Right cardiac atrium (tissue), 5 donors: ENCODE measurements at regions of chr10 and their contacts with region 1.

Region 1: DNA sequence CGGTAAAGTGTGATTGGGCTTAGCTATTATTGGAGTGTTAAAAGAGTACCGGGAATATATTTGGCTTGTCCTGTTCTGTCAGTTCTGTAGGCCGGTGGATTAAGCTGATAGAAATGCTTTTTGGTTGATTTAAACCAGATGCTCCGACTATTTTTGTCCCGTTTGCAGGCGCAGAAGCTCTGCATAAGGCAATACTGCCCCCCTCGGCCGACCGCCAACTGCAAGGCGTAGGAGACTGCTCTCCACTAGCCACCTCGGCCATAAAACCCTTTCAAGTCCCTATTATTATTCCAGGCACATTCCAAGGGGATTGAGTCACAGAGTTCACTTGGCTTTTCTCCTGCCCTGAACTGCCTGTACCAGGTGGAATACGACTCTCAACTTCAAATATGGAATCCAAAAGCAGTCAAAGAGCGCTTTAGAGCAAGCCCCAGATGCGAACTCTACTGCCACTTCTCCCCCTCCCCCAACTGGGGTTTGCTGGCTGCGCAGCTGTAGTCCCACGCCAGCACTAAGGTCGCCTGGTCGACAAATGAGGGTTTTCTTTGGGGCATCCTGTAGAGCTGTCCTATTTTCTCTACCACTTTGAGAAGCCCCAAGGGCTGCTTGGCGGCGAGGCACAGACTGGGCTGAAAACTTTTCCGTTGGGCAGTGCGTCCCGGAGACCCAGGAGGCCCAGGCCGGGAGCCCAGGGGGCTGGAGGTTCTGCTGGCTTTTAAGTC is 108.3 kb downstream of the REEP3 start:
- DNase-seq: peak; percentile 96 to 98 (median 98)
- ATAC-seq: peak; percentile 83 to 85
- H3K4me3 ChIP-seq: peak overlapping the region; percentile 46
- H3K27ac ChIP-seq: peak overlapping the region; percentile 100
- H3K4me1 ChIP-seq: peaks cover 5% of the 10 kb centered on the region
- H3K27me3 ChIP-seq: no peaks in the 10 kb centered on the region

Region 2: GRCh38 chr10:63206997-63207811 is 422.3 kb before region 1 on chr10:
- intact Hi-C with region 1: loop called in 2 of 4 experiments (anchors 5 to 10 kb)
- DNase-seq: peak in 1 of 3 donors; percentile 53
- ATAC-seq: peak; percentile 85 to 86
- H3K4me3 ChIP-seq: peak overlapping the region; percentile 29
- H3K27ac ChIP-seq: peak overlapping the region; percentile 65
- H3K4me1 ChIP-seq: peaks cover 5% of the 10 kb centered on the region
- H3K27me3 ChIP-seq: no peaks in the 10 kb centered on the region

Region 3: DNA sequence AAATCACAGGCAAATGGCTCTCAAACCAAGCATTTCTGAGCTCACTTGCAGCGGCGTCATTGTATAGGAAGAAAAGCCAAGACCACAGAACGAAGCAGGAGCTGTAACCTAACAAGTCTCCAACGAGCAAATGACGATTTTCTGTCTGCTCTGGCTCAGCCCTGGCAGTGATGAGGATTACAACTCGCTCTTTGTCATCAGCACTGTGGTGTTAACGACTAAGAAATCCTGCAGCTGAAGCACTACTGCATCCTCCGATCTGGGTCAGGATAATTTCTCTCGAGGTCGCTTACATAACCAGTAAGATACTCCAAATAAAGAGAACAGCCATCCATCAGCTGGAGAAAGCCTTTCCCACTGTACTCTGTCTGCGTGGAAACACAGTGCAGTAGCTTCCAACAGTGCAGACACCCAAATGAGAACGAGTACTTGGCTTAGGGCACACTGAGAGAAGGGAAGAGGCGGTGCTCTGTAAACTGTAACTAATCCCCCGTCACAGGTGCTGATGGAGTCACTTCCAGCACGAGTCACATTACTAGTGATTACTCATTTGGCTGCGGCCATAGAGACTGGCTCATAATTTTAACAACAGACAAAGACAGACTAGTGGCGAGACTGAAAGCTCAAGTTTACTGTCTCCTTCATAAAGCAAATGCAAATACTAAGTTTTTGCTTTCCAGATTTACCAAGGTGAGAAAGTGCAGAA is 360.6 kb before region 1 on chr10:
- intact Hi-C with region 1: loop called in 1 of 4 experiments (anchors 2 kb)
- DNase-seq: peak; percentile 69 to 74 (median 73)
- ATAC-seq: peak; percentile 97 to 99
- H3K4me3 ChIP-seq: peak overlapping the region; percentile 93
- H3K27ac ChIP-seq: peak overlapping the region; percentile 99
- H3K4me1 ChIP-seq: no peaks in the 10 kb centered on the region
- H3K27me3 ChIP-seq: no peaks in the 10 kb centered on the region

Region 4: DNA sequence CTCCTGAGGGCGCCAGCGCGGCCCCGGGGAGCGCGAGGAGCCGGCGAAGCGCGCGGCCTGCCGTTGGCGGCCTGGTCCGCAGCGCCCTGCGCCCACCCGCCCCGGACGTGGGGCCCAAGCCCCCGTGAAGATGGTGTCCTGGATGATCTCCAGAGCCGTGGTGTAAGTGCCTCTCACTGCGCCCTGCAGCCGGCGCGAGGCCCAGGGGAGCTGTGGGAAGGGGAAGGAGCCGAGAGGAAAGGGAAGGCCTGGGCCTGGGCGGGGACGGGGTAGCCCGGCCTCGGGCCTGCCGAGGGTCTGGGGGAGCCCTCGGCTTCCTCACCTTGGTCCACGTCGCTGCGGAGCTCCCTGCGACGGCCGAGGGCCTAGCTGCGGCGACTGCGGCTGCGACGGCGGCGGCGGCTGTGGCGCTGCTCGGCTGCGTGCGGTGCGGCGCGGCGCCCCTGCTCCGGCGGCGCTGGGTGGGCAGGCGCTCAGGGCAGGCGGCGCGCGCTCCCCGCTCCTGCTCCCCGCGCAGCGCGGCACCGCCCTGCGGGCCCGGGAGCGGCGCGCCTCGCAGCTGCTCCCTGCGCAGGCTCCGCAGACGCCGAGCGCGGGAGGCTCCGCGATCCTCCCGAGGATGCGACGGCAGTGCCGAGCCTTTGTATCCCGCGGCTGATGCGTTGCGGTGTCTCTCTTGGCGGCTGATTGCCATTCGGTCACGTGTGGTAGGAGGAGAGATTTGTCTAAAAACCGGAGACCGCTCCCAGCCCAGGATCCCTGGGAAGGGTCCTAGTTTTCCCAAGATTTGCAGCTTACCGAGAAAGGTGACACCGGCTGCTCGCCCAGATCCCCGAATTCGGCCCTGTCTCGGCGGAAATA is 107.9 kb before region 1 on chr10:
- intact Hi-C with region 1: loop called in 1 of 4 experiments (anchors 5 kb)
- DNase-seq: peak; percentile 76 to 89 (median 89)
- ATAC-seq: peak; percentile 90
- H3K4me3 ChIP-seq: peak overlapping the region; percentile 60
- H3K27ac ChIP-seq: peak overlapping the region; percentile 89
- H3K4me1 ChIP-seq: peaks cover 4% of the 10 kb centered on the region
- H3K27me3 ChIP-seq: no peaks in the 10 kb centered on the region

Region 5: GRCh38 chr10:63666836-63667383 is 37.4 kb after region 1 on chr10:
- intact Hi-C with region 1: no loop called
- DNase-seq: no peak
- ATAC-seq: peak; percentile 37 to 42
- H3K4me3 ChIP-seq: no peak overlapping the region
- H3K27ac ChIP-seq: no peak overlapping the region
- H3K4me1 ChIP-seq: peaks cover 3% of the 10 kb centered on the region
- H3K27me3 ChIP-seq: no peaks in the 10 kb centered on the region

Region 6: GRCh38 chr10:63720072-63720537 is 90.6 kb after region 1 on chr10:
- intact Hi-C with region 1: loop called in 1 of 4 experiments (anchors 5 kb)
- DNase-seq: no peak
- ATAC-seq: no peak
- H3K4me3 ChIP-seq: no peak overlapping the region
- H3K27ac ChIP-seq: no peak overlapping the region
- H3K4me1 ChIP-seq: peaks cover 3% of the 10 kb centered on the region
- H3K27me3 ChIP-seq: no peaks in the 10 kb centered on the region

Region 7: GRCh38 chr10:64708884-64709681 is 1079.6 kb after region 1 on chr10:
- intact Hi-C with region 1: no loop called
- DNase-seq: no peak
- ATAC-seq: no peak
- H3K4me3 ChIP-seq: no peak overlapping the region
- H3K27ac ChIP-seq: no peak overlapping the region
- H3K4me1 ChIP-seq: no peaks in the 10 kb centered on the region
- H3K27me3 ChIP-seq: no peaks in the 10 kb centered on the region